ENCODE measurements at regions of chr5 and their contacts with region 1.

Region 1: DNA sequence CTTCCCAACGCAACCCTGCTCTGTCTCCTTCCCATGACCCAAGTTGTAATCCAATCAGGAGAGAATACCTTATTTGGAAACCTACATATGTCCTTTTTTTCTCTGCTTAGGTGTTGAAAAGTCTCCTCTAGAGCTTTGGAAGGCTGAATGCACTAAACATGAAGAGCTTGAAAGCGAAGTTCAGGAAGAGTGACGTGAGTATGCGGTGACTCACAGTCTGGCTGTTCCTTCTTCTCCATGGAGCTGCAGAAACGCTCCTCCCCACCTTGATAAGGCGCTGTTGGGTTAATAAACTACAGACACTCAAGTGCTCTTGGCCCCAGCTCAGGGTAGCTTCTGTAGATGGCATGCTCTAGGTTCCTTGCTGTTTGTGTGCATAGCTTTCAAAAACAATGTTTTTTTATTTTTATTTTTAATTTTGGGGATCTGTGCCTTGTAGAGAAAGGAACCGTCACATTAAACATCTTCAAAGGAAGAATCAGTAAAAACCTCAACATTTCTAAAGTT is 30.7 kb downstream of the RAI14 start:
- DNase-seq: peak; percentile 88 to 90
- H3K4me3 ChIP-seq: no peak overlapping the region
- H3K27ac ChIP-seq: peak overlapping the region; percentile 34
- H3K4me1 ChIP-seq: peaks cover 58% of the 10 kb centered on the region
- H3K27me3 ChIP-seq: no peaks in the 10 kb centered on the region
- CTCF ChIP-seq: no peak

Region 2: GRCh38 chr5:34522599-34523386 is 164.0 kb before region 1 on chr5:
- CTCF ChIA-PET with region 1: interaction called, 5 read pairs
- POLR2A ChIA-PET with region 1: interaction called, 4 read pairs
- intact Hi-C with region 1: loop called (anchors 1 kb)
- DNase-seq: peak; percentile 86 to 87
- H3K4me3 ChIP-seq: no peak overlapping the region
- H3K27ac ChIP-seq: peak overlapping the region; percentile 69
- H3K4me1 ChIP-seq: peaks cover 72% of the 10 kb centered on the region
- H3K27me3 ChIP-seq: no peaks in the 10 kb centered on the region
- CTCF ChIP-seq: peak; percentile 97

Region 3: DNA sequence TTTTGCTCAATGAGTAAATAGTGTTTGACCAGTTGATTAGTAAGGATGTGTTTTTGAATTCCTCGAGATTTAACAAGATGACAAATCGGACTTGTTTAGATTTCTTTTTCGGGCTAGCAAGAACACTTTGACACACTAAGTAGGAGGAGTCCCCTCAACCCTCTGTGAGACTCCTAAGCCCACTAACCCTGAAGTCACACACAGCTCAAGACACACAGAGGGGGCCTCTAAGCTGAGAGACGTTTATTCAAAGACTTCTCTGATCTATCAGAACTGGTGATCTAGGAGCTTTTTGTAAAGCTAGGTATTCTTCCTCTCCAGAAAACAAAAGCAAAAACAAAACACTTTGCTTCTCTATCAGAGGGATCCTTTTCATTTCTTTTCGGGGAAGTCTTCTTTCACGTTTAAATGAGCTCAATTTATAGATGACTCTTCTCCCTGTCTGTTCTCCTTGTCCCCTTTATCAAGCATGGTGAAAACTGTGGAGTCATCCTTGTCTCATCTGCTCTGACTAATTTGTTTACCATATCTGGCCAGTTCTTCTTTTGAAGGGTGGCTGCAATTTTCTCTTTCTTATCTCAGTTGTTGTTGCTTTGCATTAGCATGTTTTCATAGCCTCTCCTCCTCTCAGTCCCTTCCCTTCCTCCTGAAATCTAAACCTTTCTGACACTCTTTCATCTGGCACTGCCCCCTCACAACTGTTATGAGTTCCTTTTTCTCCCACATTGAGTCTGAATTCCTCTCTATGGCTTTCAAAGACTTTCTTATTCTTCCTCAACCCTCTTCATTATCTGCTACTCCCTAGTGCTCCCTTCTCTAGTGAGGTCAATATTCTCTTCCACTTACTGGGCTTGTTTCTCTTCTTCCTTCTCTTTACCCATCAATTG is 99.2 kb before region 1 on chr5:
- CTCF ChIA-PET with region 1: interaction called, 4 read pairs
- POLR2A ChIA-PET with region 1: interaction called, 10 read pairs
- intact Hi-C with region 1: loop called (anchors 1 kb)
- DNase-seq: peak in 1 of 2 experiments; percentile 86
- H3K4me3 ChIP-seq: peak overlapping the region; percentile 51
- H3K27ac ChIP-seq: peak overlapping the region; percentile 97
- H3K4me1 ChIP-seq: peaks cover 76% of the 10 kb centered on the region
- H3K27me3 ChIP-seq: no peaks in the 10 kb centered on the region
- CTCF ChIP-seq: no peak

Region 4: DNA sequence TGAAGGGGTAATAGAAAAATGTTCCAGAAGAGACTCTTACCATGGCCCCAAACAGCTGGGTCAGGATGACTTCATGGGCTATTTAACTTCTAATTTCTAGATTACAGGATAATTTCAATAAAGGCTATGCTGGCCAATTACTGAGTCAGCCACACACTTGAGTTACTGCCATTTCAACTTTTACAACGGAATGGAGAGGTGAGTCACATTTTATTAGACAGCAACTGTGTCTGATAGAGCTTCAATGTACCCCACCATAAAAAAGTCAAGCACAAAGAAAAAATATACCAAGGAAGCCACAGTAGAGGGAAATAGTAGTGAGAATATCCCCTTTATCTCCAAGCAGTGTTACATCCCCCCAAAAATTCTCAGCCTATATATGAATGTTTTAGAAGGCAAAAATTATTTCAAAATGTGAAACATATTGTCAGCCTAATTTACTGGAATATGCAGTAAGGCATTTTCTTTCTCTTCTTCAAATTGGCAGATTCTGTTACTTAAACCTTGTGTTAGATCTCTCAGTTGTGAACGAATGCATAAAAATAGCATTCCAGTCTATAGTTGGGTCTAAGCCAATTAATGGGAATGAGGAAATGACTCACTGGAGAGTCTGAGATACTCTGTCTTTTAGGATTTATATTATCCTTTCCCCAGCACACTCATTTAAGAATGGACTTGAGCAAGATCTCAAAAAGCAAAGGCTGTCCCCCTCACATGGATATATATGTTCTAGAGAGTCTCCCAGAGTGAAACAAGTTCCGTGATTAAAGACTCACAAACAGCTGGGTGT is 77.8 kb before region 1 on chr5:
- CTCF ChIA-PET with region 1: interaction called, 3 read pairs
- POLR2A ChIA-PET with region 1: no interaction called
- intact Hi-C with region 1: loop called (anchors 1 kb)
- DNase-seq: peak; percentile 43 to 94
- H3K4me3 ChIP-seq: peak overlapping the region; percentile 12; the same call in 1 of the 2 replicates
- H3K27ac ChIP-seq: peak overlapping the region; percentile 82
- H3K4me1 ChIP-seq: peaks cover 39% of the 10 kb centered on the region
- H3K27me3 ChIP-seq: no peaks in the 10 kb centered on the region
- CTCF ChIP-seq: no peak

Region 5: GRCh38 chr5:34699155-34700077 is 12.6 kb after region 1 on chr5:
- CTCF ChIA-PET with region 1: interaction called, 6 read pairs
- POLR2A ChIA-PET with region 1: interaction called, 14 read pairs
- intact Hi-C with region 1: no loop called
- DNase-seq: peak in 1 of 2 experiments; percentile 76
- H3K4me3 ChIP-seq: no peak overlapping the region
- H3K27ac ChIP-seq: peak overlapping the region; percentile 16; the same call in 1 of the 2 replicates
- H3K4me1 ChIP-seq: peaks cover 46% of the 10 kb centered on the region
- H3K27me3 ChIP-seq: no peaks in the 10 kb centered on the region
- CTCF ChIP-seq: no peak

Region 6: DNA sequence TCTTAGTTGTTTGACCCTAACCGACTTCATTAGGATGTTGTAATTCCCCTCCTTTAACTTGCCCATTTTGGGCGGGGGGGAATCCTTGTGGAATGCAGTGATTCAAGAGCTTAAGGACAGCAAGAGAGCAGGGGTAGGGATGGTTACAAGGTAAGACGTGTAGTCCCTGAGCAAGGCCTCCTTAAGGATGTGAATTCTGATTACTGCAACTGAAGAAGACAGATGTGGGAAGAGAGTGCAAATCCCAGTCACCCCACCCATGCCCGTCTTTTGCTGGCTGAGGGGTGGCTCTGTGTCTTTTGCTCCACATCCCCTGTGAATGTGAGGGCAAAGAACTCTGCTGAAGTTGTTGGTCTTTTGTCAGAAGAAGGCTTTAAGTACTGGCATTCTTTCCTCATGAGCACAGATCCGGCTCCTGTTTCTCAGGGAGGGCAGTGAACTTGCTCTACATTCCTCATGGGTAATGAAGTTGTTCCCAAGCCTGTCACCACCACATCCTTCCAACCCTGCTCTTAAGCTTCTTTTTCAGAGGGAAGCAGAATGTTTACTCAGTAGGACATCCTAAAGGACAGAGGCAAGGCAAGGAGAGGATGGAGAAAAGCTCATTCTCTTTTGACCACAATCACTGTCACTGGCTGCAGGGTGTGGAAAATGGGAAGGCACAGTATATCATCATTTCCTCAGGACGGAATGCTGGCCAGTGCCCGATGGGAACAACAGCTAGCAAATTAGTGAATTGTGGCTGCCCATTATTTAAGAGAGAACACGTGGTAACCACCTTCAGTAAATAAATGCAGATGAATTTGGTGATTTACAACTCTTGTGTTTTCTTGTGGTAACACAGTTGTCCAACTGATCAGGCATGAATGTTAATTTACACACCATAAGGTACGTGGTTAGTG is 30.9 kb after region 1 on chr5:
- CTCF ChIA-PET with region 1: interaction called, 9 read pairs
- POLR2A ChIA-PET with region 1: interaction called, 9 read pairs
- intact Hi-C with region 1: loop called (anchors 1 kb)
- DNase-seq: peak; percentile 87 to 100
- H3K4me3 ChIP-seq: peak overlapping the region; percentile 17; the same call in 1 of the 2 replicates
- H3K27ac ChIP-seq: peak overlapping the region; percentile 97
- H3K4me1 ChIP-seq: peaks cover 60% of the 10 kb centered on the region
- H3K27me3 ChIP-seq: no peaks in the 10 kb centered on the region
- CTCF ChIP-seq: no peak

Region 7: GRCh38 chr5:34838785-34839714 is 152.2 kb after region 1 on chr5 and contains the start of gene TTC23L:
- CTCF ChIA-PET with region 1: interaction called, 4 read pairs
- POLR2A ChIA-PET with region 1: interaction called, 5 read pairs
- intact Hi-C with region 1: loop called (anchors 1 kb)
- DNase-seq: peak; percentile 86 to 98
- H3K4me3 ChIP-seq: peak within 1 kb of the TSS; percentile 68
- H3K27ac ChIP-seq: peak within 1 kb of the TSS; percentile 21; the same call in 1 of the 2 replicates
- H3K4me1 ChIP-seq: peaks cover 6% of the 10 kb centered on the region
- H3K27me3 ChIP-seq: no peaks in the 10 kb centered on the region
- CTCF ChIP-seq: no peak
- total RNA-seq, gene TTC23L: 3.9 and 7.1 TPM in 2 replicates

Region 8: DNA sequence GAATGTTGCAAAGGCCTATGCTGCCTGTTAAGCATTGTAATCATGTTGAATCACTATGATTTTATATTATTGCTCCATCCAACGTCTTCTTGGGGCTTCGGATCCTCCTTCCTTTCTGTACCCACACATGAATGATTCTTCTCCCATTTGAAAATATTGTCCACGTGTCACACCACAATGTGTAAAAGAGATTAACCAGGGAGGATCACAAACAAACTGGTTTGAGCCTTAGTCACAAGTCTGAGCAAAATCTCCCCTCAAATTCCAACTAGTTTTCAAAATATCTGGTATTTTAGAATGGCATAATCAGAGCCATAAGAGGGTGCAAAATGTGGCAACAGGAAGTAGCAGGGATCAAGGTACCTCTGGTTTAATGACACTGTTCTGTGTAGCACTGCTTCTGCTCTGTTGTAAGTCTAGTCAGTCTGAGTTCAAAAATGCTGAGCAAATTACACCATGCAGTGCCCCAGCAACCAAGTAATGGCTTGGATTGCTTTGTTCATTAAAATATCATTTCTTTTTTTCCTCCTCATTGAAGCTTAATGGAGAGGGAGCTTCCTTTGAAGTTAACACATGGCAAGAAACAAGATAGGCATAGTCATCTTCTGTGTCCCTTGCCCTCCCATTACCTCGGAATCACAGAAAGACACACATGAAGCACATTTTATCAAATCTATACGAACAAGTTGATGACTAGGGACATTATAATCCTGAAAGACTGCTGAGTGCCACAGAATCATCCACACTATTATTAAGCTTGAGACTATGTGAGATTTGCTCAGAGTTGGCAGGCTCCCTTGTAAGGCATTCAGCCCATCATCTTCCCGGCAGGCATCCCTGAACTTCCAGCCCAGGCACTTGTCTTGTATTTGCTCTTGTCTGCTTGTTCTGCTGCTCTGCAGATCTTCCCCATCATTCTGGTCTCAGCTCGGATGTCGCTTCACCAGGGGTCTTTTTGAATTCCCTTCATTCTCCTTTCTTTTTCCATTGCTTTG is 645.4 kb after region 1 on chr5:
- CTCF ChIA-PET with region 1: no interaction called
- POLR2A ChIA-PET with region 1: no interaction called
- intact Hi-C with region 1: no loop called
- DNase-seq: peak in 1 of 2 experiments; percentile 21
- H3K4me3 ChIP-seq: no peak overlapping the region
- H3K27ac ChIP-seq: no peak overlapping the region
- H3K4me1 ChIP-seq: no peaks in the 10 kb centered on the region
- H3K27me3 ChIP-seq: peaks cover 37% of the 10 kb centered on the region; the same call in 1 of the 2 replicates
- CTCF ChIP-seq: no peak

Measured in PC-9 (cell line).